ENCODE measurements at regions of chr11 and their contacts with region 1.

Region 1: GRCh38 chr11:100575870-100576705 is 111.0 kb upstream of the ARHGAP42 start:
- DNase-seq: peak in 1 of 2 experiments; percentile 64
- H3K4me3 ChIP-seq: no peak overlapping the region
- H3K4me3 Mint-ChIP-seq: no peak overlapping the region
- H3K27ac Mint-ChIP-seq: no peak overlapping the region
- H3K4me1 ChIP-seq: no peaks in the 10 kb centered on the region
- H3K4me1 Mint-ChIP-seq: no peaks in the 10 kb centered on the region
- H3K27me3 ChIP-seq: no peaks in the 10 kb centered on the region
- H3K27me3 Mint-ChIP-seq: peaks cover 2% of the 10 kb centered on the region
- CTCF ChIP-seq: peak; percentile 80 to 93

Region 2: GRCh38 chr11:99814738-99815137 is 761.4 kb before region 1 on chr11:
- CTCF ChIA-PET with region 1: no interaction called
- POLR2A ChIA-PET with region 1: no interaction called
- intact Hi-C with region 1: loop called (anchors 1 kb)
- DNase-seq: peak in 1 of 2 experiments; percentile 16
- H3K4me3 ChIP-seq: no peak overlapping the region
- H3K4me3 Mint-ChIP-seq: no peak overlapping the region
- H3K27ac Mint-ChIP-seq: no peak overlapping the region
- H3K4me1 ChIP-seq: no peaks in the 10 kb centered on the region
- H3K4me1 Mint-ChIP-seq: no peaks in the 10 kb centered on the region
- H3K27me3 ChIP-seq: no peaks in the 10 kb centered on the region
- H3K27me3 Mint-ChIP-seq: no peaks in the 10 kb centered on the region
- CTCF ChIP-seq: peak; percentile 36 to 40

Region 3: DNA sequence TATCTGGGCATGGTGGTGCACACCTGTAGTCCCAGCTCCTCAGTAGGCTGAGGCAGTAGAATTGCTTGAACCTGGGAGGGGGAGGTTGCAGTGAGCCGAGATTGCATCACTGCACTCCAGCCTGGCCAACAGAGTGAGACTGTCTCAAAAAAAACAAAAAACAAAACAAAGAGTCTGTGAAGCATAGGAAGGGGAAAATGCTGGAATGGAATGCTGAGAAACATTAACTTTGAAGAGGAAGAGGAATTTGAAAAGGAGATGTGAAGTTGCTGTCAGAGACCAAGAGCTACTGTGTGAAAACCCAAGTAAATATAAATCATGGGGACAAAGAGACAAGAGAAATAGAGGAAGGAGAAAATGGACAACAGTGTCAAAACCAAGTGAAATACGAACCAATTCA is 344.1 kb before region 1 on chr11:
- CTCF ChIA-PET with region 1: no interaction called
- POLR2A ChIA-PET with region 1: no interaction called
- intact Hi-C with region 1: loop called (anchors 1 kb)
- DNase-seq: no peak
- H3K4me3 ChIP-seq: no peak overlapping the region
- H3K4me3 Mint-ChIP-seq: no peak overlapping the region
- H3K27ac Mint-ChIP-seq: no peak overlapping the region
- H3K4me1 ChIP-seq: no peaks in the 10 kb centered on the region
- H3K4me1 Mint-ChIP-seq: no peaks in the 10 kb centered on the region
- H3K27me3 ChIP-seq: no peaks in the 10 kb centered on the region
- H3K27me3 Mint-ChIP-seq: peaks cover 3% of the 10 kb centered on the region
- CTCF ChIP-seq: no peak

Region 4: DNA sequence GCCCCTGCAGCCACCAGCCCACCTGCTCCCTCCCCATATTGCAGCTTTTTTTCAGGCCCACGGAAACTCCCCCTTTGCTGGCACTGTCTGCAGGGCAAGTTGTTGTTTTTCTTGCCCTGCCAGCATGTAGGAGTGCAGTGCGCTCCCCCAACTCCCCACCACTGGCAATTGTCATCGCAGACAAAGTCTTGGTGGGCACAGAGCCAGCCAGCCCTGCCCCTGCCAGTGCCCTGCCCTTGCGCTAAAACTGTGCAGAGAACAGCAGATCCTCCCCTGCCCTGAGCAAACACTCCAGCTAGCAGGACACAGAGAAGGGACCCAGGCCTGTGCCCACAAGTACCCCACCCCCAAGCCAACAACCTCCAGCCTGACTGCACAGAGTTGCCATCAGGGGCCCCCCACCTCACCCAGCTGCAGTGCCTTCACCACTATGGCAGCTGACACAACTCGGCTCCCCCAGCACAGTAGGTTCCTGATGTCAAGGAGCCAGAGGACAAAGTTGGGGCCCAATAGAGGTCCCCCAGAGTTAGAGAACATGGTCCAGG is 47.1 kb before region 1 on chr11:
- CTCF ChIA-PET with region 1: no interaction called
- POLR2A ChIA-PET with region 1: no interaction called
- intact Hi-C with region 1: no loop called
- DNase-seq: no peak
- H3K4me3 ChIP-seq: no peak overlapping the region
- H3K4me3 Mint-ChIP-seq: no peak overlapping the region
- H3K27ac Mint-ChIP-seq: no peak overlapping the region
- H3K4me1 ChIP-seq: no peaks in the 10 kb centered on the region
- H3K4me1 Mint-ChIP-seq: no peaks in the 10 kb centered on the region
- H3K27me3 ChIP-seq: no peaks in the 10 kb centered on the region
- H3K27me3 Mint-ChIP-seq: no peaks in the 10 kb centered on the region
- CTCF ChIP-seq: no peak

Region 5: DNA sequence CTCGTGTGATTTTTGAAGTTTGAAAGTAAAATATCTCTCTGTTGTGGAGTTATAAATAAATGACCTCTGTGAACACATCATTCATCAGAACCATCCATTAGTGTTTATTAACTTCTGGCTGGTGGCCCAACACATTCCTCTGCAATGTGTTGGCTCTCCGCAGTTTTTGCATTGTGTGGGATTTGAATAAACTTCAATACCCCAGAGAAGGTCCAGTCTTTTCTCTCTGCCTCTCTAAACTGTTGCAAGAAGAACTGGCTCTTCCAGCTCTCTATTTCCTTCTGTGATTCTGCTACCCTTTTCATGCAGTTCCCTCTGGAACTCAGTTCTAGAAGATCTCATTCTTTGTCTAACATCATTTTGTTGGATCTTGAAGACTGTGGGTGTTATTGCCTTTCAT is 14.0 kb before region 1 on chr11:
- CTCF ChIA-PET with region 1: no interaction called
- POLR2A ChIA-PET with region 1: no interaction called
- intact Hi-C with region 1: no loop called
- DNase-seq: no peak
- H3K4me3 ChIP-seq: no peak overlapping the region
- H3K4me3 Mint-ChIP-seq: no peak overlapping the region
- H3K27ac Mint-ChIP-seq: no peak overlapping the region
- H3K4me1 ChIP-seq: no peaks in the 10 kb centered on the region
- H3K4me1 Mint-ChIP-seq: no peaks in the 10 kb centered on the region
- H3K27me3 ChIP-seq: no peaks in the 10 kb centered on the region
- H3K27me3 Mint-ChIP-seq: no peaks in the 10 kb centered on the region
- CTCF ChIP-seq: no peak

Region 6: GRCh38 chr11:100639140-100639539 is 63.1 kb after region 1 on chr11:
- CTCF ChIA-PET with region 1: no interaction called
- POLR2A ChIA-PET with region 1: no interaction called
- intact Hi-C with region 1: no loop called
- DNase-seq: no peak
- H3K4me3 ChIP-seq: no peak overlapping the region
- H3K4me3 Mint-ChIP-seq: no peak overlapping the region
- H3K27ac Mint-ChIP-seq: no peak overlapping the region
- H3K4me1 ChIP-seq: no peaks in the 10 kb centered on the region
- H3K4me1 Mint-ChIP-seq: peaks cover 7% of the 10 kb centered on the region
- H3K27me3 ChIP-seq: no peaks in the 10 kb centered on the region
- H3K27me3 Mint-ChIP-seq: peaks cover 2% of the 10 kb centered on the region
- CTCF ChIP-seq: no peak

Region 7: GRCh38 chr11:100681064-100681502 is 105.0 kb after region 1 on chr11:
- CTCF ChIA-PET with region 1: no interaction called
- POLR2A ChIA-PET with region 1: no interaction called
- intact Hi-C with region 1: loop called (anchors 2 kb)
- DNase-seq: peak; percentile 81 to 86
- H3K4me3 ChIP-seq: no peak overlapping the region
- H3K4me3 Mint-ChIP-seq: peak overlapping the region; percentile 34
- H3K27ac Mint-ChIP-seq: peak overlapping the region; percentile 71
- H3K4me1 ChIP-seq: no peaks in the 10 kb centered on the region; the same call in 1 of the 2 replicates
- H3K4me1 Mint-ChIP-seq: peaks cover 13% of the 10 kb centered on the region
- H3K27me3 ChIP-seq: no peaks in the 10 kb centered on the region
- H3K27me3 Mint-ChIP-seq: no peaks in the 10 kb centered on the region
- CTCF ChIP-seq: no peak

Region 8: GRCh38 chr11:100827934-100828661 is 252.0 kb after region 1 on chr11:
- CTCF ChIA-PET with region 1: interaction called, 16 read pairs
- POLR2A ChIA-PET with region 1: no interaction called
- intact Hi-C with region 1: loop called (anchors 1 kb)
- DNase-seq: peak; percentile 82 to 85
- H3K4me3 ChIP-seq: no peak overlapping the region
- H3K4me3 Mint-ChIP-seq: no peak overlapping the region
- H3K27ac Mint-ChIP-seq: peak overlapping the region; percentile 73
- H3K4me1 ChIP-seq: peaks cover 36% of the 10 kb centered on the region
- H3K4me1 Mint-ChIP-seq: peaks cover 29% of the 10 kb centered on the region
- H3K27me3 ChIP-seq: no peaks in the 10 kb centered on the region
- H3K27me3 Mint-ChIP-seq: no peaks in the 10 kb centered on the region
- CTCF ChIP-seq: peak; percentile 79 to 90

Region 9: DNA sequence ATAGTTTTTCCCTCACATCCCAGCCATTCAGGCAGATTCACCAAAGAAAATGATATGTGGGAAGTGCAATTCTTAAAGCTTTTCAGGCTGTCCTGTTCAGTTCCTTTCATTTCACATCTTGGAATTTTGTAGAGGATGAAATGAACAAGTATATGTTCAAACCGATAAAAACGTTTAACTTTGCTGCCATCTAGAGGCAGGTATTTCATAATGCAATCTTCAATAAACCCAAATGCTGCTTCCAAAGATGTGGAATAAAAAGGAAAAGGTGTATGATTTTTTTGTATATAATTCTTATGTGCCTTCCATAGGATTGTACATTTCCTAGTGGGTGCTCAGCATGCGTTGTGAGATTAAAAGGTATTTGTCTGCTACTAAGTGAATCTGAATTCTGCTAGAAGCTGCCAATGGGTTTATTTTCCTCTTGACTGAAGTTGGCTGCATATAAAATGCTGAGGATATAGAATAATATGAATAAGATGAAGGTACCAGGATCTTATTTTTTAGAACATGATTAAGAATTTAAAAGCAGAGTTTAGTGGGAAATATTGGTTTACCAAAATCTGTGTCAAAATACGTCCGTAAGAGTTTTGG is 354.2 kb after region 1 on chr11:
- CTCF ChIA-PET with region 1: interaction called, 3 read pairs
- POLR2A ChIA-PET with region 1: no interaction called
- intact Hi-C with region 1: loop called (anchors 1 kb)
- DNase-seq: peak in 1 of 2 experiments; percentile 66
- H3K4me3 ChIP-seq: no peak overlapping the region
- H3K4me3 Mint-ChIP-seq: no peak overlapping the region
- H3K27ac Mint-ChIP-seq: no peak overlapping the region
- H3K4me1 ChIP-seq: peaks cover 14% of the 10 kb centered on the region; the same call in 1 of the 2 replicates
- H3K4me1 Mint-ChIP-seq: peaks cover 7% of the 10 kb centered on the region
- H3K27me3 ChIP-seq: no peaks in the 10 kb centered on the region
- H3K27me3 Mint-ChIP-seq: no peaks in the 10 kb centered on the region
- CTCF ChIP-seq: peak; percentile 73 to 75

Measured in Caco-2 (cell line).